PC-9 (cell line): ENCODE measurements at regions of chr14 and their contacts with region 1.

Region 1: GRCh38 chr14:75560962-75561432 is 17.4 kb upstream of the FLVCR2 start:
- DNase-seq: peak; percentile 90 to 98
- H3K4me3 ChIP-seq: no peak overlapping the region
- H3K27ac ChIP-seq: peak overlapping the region; percentile 89
- H3K4me1 ChIP-seq: peaks cover 57% of the 10 kb centered on the region
- H3K27me3 ChIP-seq: no peaks in the 10 kb centered on the region
- CTCF ChIP-seq: peak; percentile 99

Region 2: GRCh38 chr14:75399821-75400678 is 160.9 kb before region 1 on chr14:
- CTCF ChIA-PET with region 1: interaction called, 12 read pairs
- POLR2A ChIA-PET with region 1: interaction called, 3 read pairs
- intact Hi-C with region 1: no loop called
- DNase-seq: peak; percentile 100
- H3K4me3 ChIP-seq: peak overlapping the region; percentile 17; the same call in 1 of the 2 replicates
- H3K27ac ChIP-seq: peak overlapping the region; percentile 70
- H3K4me1 ChIP-seq: peaks cover 31% of the 10 kb centered on the region
- H3K27me3 ChIP-seq: no peaks in the 10 kb centered on the region
- CTCF ChIP-seq: no peak

Region 3: GRCh38 chr14:75440733-75441477 is 120.1 kb before region 1 on chr14:
- CTCF ChIA-PET with region 1: interaction called, 21 read pairs
- POLR2A ChIA-PET with region 1: interaction called, 5 read pairs
- intact Hi-C with region 1: no loop called
- DNase-seq: no peak
- H3K4me3 ChIP-seq: no peak overlapping the region
- H3K27ac ChIP-seq: no peak overlapping the region
- H3K4me1 ChIP-seq: peaks cover 25% of the 10 kb centered on the region
- H3K27me3 ChIP-seq: no peaks in the 10 kb centered on the region
- CTCF ChIP-seq: no peak

Region 4: GRCh38 chr14:75487155-75487671 is 73.8 kb before region 1 on chr14:
- CTCF ChIA-PET with region 1: interaction called, 47 read pairs
- POLR2A ChIA-PET with region 1: interaction called, 9 read pairs
- intact Hi-C with region 1: loop called (anchors 1 kb)
- DNase-seq: peak; percentile 83 to 99
- H3K4me3 ChIP-seq: no peak overlapping the region
- H3K27ac ChIP-seq: 0 out of 2 replicates have a peak overlapping the region, but pooled peaks have one; percentile 5
- H3K4me1 ChIP-seq: peaks cover 18% of the 10 kb centered on the region
- H3K27me3 ChIP-seq: no peaks in the 10 kb centered on the region
- CTCF ChIP-seq: no peak

Region 5: DNA sequence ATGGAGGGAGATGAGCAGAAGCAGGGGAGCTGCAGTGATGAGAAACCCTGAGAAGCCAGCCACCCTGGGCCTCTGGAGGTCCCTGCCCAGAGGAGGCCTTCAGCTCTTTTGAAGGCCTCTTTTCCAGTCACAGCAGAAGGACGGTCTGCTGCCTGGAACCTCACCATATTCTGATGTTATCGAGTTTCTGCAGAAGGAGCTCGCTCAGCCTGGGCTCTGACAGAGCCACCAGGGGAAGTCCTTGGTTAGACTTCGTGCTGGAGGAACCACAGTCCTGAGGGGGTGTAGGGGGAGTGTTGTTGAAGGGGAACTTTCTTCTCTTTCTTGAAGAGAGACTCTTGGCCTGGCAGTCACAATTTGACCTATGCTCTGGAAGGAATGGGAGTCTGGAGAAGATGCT is 63.8 kb before region 1 on chr14:
- CTCF ChIA-PET with region 1: interaction called, 7 read pairs
- POLR2A ChIA-PET with region 1: no interaction called
- intact Hi-C with region 1: loop called (anchors 1 kb)
- DNase-seq: no peak
- H3K4me3 ChIP-seq: no peak overlapping the region
- H3K27ac ChIP-seq: no peak overlapping the region
- H3K4me1 ChIP-seq: peaks cover 4% of the 10 kb centered on the region; the same call in 1 of the 2 replicates
- H3K27me3 ChIP-seq: no peaks in the 10 kb centered on the region
- CTCF ChIP-seq: no peak

Region 6: DNA sequence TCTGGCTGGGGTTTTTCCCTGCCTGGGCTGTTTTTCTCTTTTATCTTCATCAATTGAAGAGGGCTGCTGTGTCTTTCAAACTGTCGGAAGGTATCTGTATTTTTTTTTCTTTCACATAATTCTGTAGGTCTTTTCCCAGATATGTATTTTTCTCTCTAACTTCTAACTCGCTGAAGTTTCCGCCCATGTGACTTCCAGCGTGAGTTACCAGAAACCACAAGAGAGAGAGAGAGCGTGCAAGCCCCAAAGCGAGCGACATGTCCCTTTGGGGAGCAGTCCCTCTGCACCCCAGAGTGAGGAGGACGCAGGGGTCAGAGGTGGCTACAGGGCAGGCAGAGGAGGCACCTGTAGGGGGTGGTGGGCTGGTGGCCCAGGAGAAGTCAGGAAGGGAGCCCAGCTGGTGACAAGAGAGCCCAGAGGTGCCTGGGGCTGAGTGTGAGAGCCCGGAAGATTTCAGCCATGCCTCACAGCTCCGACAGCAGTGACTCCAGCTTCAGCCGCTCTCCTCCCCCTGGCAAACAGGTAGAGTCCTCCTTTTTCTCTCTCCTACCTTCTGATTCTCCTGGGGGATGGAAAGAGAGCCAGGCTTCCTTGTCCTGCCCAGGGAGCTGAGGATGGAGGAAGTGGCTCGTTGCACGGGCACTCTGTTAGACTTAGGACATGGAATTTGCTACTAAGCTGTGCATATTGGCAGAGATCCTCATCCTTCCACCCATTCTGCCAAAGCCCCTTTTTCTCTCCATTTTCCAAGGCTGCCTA is 38.6 kb before region 1 on chr14 and contains the start of gene BATF:
- CTCF ChIA-PET with region 1: interaction called, 39 read pairs
- POLR2A ChIA-PET with region 1: interaction called, 31 read pairs
- intact Hi-C with region 1: loop called (anchors 1 kb)
- DNase-seq: peak; percentile 69 to 74
- H3K4me3 ChIP-seq: peak within 1 kb of the TSS; percentile 68
- H3K27ac ChIP-seq: peak within 1 kb of the TSS; percentile 93
- H3K4me1 ChIP-seq: peaks cover 60% of the 10 kb centered on the region
- H3K27me3 ChIP-seq: no peaks in the 10 kb centered on the region
- CTCF ChIP-seq: no peak
- total RNA-seq, gene BATF: 55.7 and 79.0 TPM in 2 replicates

Region 7: DNA sequence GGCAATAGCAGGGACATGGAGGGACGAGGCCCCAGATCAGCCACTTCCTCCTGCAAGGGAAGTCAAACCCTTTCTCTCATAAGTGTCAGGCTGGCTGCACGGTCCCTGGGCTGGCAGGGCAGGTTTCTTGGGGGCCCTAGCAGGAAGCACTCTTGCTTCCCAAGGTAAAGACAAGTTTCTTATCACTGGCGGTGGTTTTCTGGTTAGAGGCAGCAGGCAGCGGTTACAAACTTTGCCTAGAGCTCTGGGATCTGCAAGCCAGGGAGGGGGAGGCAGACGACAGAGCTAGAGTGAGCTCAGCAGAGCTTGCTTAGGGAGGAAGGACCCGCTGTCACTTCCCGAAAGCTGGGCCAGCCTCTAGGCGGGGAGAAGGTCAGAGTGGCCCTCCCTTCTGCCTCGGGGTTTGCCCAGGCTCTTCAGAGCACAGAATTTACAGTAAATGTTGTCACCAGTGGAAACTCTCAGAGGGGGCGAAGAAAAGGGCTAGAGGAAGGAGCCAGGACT is 18.4 kb before region 1 on chr14:
- CTCF ChIA-PET with region 1: interaction called, 18 read pairs
- POLR2A ChIA-PET with region 1: interaction called, 4 read pairs
- intact Hi-C with region 1: loop called (anchors 2 kb)
- DNase-seq: peak; percentile 75 to 93
- H3K4me3 ChIP-seq: no peak overlapping the region
- H3K27ac ChIP-seq: peak overlapping the region; percentile 34; the same call in 1 of the 2 replicates
- H3K4me1 ChIP-seq: peaks cover 16% of the 10 kb centered on the region
- H3K27me3 ChIP-seq: no peaks in the 10 kb centered on the region
- CTCF ChIP-seq: no peak